WTC11 (cell line): ENCODE measurements at regions of chr12 and their contacts with region 1.

Region 1: GRCh38 chr12:19462406-19462805 is 23.1 kb downstream of the AEBP2 start:
- DNase-seq: no peak
- ATAC-seq: no peak
- H3K4me3 Mint-ChIP-seq: no peak overlapping the region
- H3K27ac Mint-ChIP-seq: peak overlapping the region; percentile 44; the same call in 1 of the 2 replicates
- H3K4me1 Mint-ChIP-seq: peaks cover 32% of the 10 kb centered on the region
- H3K27me3 Mint-ChIP-seq: no peaks in the 10 kb centered on the region
- CTCF ChIP-seq: no peak

Region 2: GRCh38 chr12:19382111-19382526 is 80.3 kb before region 1 on chr12:
- CTCF ChIA-PET with region 1: no interaction called
- POLR2A ChIA-PET with region 1: interaction called, 10 read pairs
- DNase-seq: no peak
- ATAC-seq: peak; percentile 71
- H3K4me3 Mint-ChIP-seq: no peak overlapping the region
- H3K27ac Mint-ChIP-seq: no peak overlapping the region; the same call in 1 of the 2 replicates
- H3K4me1 Mint-ChIP-seq: peaks cover 14% of the 10 kb centered on the region
- H3K27me3 Mint-ChIP-seq: no peaks in the 10 kb centered on the region
- CTCF ChIP-seq: no peak

Region 3: DNA sequence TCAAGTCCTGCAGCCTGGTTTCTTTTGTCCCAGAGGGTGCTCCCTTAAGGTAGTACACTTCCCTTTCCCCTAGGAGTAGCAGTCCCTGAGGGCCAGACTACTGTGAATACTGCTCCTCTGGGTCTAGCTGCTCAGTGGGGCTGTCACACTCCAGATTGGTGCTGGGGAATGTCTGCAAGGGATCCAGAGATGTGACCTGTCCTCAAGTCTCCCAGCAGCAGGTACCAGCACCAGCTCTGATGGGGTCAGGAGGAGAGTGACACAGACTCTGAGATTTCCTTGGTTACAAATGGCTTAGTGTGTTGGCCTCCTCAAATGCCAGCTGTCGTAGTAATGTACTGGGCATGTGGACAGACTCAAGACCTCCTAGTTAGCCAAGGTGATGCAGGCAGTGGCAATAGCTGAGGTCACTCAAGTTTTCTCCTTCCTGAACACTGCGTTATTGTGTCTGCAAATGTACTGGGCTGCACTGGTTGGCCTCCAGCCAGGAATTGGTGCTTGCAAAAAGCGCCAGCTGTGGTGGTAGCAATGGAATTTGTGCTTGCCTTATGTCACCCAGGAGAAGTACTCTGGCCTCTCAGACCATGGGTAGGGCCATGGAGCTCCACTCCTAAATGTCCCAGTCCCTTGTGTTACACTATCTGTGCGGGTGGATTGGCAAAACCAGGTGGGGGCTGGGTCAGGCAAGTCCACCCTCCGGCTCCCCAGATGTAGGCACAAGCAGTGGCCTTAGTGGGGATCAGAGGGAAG is 59.5 kb before region 1 on chr12:
- CTCF ChIA-PET with region 1: no interaction called
- POLR2A ChIA-PET with region 1: no interaction called
- DNase-seq: no peak
- ATAC-seq: peak; percentile 78
- H3K4me3 Mint-ChIP-seq: no peak overlapping the region
- H3K27ac Mint-ChIP-seq: no peak overlapping the region
- H3K4me1 Mint-ChIP-seq: peaks cover 14% of the 10 kb centered on the region
- H3K27me3 Mint-ChIP-seq: no peaks in the 10 kb centered on the region
- CTCF ChIP-seq: no peak

Region 4: GRCh38 chr12:19415563-19415962 is 46.8 kb before region 1 on chr12:
- CTCF ChIA-PET with region 1: no interaction called
- POLR2A ChIA-PET with region 1: no interaction called
- DNase-seq: no peak
- ATAC-seq: no peak
- H3K4me3 Mint-ChIP-seq: no peak overlapping the region
- H3K27ac Mint-ChIP-seq: no peak overlapping the region
- H3K4me1 Mint-ChIP-seq: peaks cover 20% of the 10 kb centered on the region
- H3K27me3 Mint-ChIP-seq: no peaks in the 10 kb centered on the region
- CTCF ChIP-seq: no peak

Region 5: GRCh38 chr12:19431407-19432308 is 30.7 kb before region 1 on chr12:
- CTCF ChIA-PET with region 1: no interaction called
- POLR2A ChIA-PET with region 1: no interaction called
- DNase-seq: no peak
- ATAC-seq: peak; percentile 65
- H3K4me3 Mint-ChIP-seq: no peak overlapping the region
- H3K27ac Mint-ChIP-seq: peak overlapping the region; percentile 96
- H3K4me1 Mint-ChIP-seq: peaks cover 37% of the 10 kb centered on the region
- H3K27me3 Mint-ChIP-seq: no peaks in the 10 kb centered on the region
- CTCF ChIP-seq: no peak

Region 6: DNA sequence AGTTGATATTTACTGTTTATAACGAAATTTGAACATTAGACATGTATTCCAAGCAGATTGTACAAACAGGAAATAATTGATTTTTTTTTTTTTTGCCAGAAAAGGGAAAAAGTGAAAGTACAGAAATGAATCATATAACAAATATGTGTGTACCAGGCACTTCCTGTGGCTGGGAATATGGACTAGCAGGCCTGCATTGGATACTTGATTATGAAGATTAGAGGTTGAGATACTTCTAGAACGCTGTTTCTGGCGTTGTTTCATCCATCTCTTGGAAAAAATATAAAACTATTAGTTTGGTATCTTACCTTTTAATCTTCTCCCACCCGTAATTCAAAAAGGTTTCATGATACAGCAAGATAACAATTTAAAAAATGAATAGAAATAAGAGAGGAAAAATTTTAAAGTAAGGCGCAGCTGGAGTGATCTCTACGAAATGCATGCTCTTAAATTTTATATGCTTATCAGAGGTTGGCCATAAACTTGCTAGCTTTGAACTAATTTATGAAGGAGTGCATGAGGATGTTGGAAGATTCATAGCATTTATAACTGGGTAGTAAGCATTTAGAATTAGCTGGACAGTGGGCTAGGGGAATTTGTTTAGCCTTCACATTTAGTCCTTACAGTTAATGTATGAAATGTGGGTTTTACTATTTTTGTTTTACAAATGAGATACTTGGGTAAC is 67.7 kb after region 1 on chr12:
- CTCF ChIA-PET with region 1: no interaction called
- POLR2A ChIA-PET with region 1: no interaction called
- DNase-seq: no peak
- ATAC-seq: no peak
- H3K4me3 Mint-ChIP-seq: no peak overlapping the region
- H3K27ac Mint-ChIP-seq: no peak overlapping the region
- H3K4me1 Mint-ChIP-seq: peaks cover 27% of the 10 kb centered on the region
- H3K27me3 Mint-ChIP-seq: no peaks in the 10 kb centered on the region
- CTCF ChIP-seq: no peak